ENCODE measurements at regions of chr6 and their contacts with region 1.

Region 1: DNA sequence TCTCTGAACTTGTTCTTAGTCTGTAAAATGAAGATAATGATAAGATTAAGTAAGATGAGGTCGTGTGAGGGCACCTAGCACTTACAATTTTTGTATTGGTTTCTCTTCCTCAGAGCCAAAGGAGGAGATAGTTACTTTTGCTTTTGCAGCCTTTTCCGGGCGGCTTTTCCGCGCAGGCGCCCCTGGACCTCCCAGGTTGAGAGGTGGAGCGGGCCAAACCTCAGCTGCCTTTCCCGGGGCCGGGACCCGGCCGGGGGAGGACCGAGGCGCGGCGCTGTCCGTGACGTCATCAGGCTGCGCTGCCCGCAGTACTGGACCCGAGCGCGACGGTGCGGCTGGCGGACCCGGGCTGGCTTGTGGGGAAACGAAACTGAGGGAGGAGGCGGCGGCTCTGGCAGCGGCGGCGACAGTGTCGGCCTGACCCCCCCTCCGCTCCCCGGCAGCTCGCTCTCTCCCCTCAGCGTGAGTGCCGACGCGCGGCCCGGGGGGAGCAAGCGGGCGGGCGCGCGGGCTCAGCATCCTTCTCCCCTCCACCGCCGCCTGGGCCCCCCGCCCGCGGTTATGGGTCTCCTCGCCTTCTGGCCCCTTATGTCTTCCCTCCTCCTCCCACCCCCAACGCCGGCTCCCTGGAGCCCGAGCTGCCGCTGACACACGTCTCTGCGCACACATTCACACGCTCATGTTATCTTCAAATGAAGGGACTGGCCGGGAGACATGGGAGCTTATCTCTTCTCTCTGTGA is at the start of gene CMTR1:
- DNase-seq: peak; percentile 98
- H3K4me3 Mint-ChIP-seq: peak within 1 kb of the TSS; percentile 87
- H3K27ac Mint-ChIP-seq: peak within 1 kb of the TSS; percentile 75
- H3K4me1 Mint-ChIP-seq: peaks cover 34% of the 10 kb centered on the region
- H3K27me3 Mint-ChIP-seq: peaks cover 7% of the 10 kb centered on the region
- CTCF ChIP-seq: no peak
- total RNA-seq, gene CMTR1: 50.3 and 62.5 TPM in 2 replicates

Region 2: DNA sequence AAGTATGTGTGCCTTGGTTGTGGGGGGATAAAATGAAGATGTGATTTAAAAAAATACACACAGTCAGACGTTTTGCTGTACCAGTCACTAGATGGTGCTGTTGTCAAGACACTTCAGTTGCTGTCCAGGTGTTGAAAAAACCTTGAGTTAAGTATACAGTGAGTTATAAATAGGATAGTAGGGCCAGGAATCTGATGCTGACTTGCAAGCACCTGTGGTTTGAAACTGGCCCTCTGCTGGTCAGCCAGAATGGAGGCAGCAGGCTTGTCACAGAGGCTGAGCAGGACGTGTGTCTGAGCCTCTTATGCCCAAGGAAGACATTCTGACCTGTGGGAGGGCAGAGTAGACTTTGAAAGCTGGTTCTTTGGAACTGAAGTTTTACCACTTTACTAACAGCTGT is 51.5 kb before region 1 on chr6:
- CTCF ChIA-PET with region 1: no interaction called
- intact Hi-C with region 1: loop called (anchors 5 kb)
- DNase-seq: peak; percentile 63
- H3K4me3 Mint-ChIP-seq: no peak overlapping the region
- H3K27ac Mint-ChIP-seq: no peak overlapping the region
- H3K4me1 Mint-ChIP-seq: no peaks in the 10 kb centered on the region
- H3K27me3 Mint-ChIP-seq: no peaks in the 10 kb centered on the region
- CTCF ChIP-seq: peak; percentile 70